PC-9 (cell line): ENCODE measurements at regions of chr11 and their contacts with region 1.

Region 1: GRCh38 chr11:76501526-76502210 is 56.9 kb downstream of the EMSY start:
- DNase-seq: no peak
- H3K4me3 ChIP-seq: no peak overlapping the region
- H3K27ac ChIP-seq: no peak overlapping the region
- H3K4me1 ChIP-seq: no peaks in the 10 kb centered on the region
- H3K27me3 ChIP-seq: no peaks in the 10 kb centered on the region
- CTCF ChIP-seq: no peak

Region 2: DNA sequence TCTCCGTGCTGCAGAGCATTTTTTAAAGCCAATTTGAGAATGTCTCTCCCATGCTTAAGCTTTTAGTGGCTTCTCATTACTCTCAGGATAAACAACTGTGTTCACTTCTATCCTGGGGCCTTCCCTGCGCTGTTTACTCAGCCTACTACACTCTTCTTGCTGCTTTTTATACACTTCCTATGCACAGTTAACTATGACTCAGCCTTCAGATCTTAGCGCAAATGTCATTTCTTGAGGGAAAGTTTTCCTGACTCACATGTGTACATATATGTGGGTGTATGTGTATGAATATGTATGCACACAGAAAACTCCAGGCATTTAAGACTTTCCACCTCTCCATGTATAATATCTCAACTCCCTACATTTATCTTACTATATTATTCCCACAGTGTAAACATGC is 130.5 kb before region 1 on chr11:
- CTCF ChIA-PET with region 1: interaction called, 10 read pairs
- POLR2A ChIA-PET with region 1: no interaction called
- intact Hi-C with region 1: no loop called
- DNase-seq: no peak
- H3K4me3 ChIP-seq: no peak overlapping the region
- H3K27ac ChIP-seq: no peak overlapping the region
- H3K4me1 ChIP-seq: peaks cover 5% of the 10 kb centered on the region; the same call in 1 of the 2 replicates
- H3K27me3 ChIP-seq: no peaks in the 10 kb centered on the region
- CTCF ChIP-seq: no peak